Prostate gland (tissue), 2 donors: ENCODE measurements at regions of chr3 and their contacts with region 1.

Region 1: DNA sequence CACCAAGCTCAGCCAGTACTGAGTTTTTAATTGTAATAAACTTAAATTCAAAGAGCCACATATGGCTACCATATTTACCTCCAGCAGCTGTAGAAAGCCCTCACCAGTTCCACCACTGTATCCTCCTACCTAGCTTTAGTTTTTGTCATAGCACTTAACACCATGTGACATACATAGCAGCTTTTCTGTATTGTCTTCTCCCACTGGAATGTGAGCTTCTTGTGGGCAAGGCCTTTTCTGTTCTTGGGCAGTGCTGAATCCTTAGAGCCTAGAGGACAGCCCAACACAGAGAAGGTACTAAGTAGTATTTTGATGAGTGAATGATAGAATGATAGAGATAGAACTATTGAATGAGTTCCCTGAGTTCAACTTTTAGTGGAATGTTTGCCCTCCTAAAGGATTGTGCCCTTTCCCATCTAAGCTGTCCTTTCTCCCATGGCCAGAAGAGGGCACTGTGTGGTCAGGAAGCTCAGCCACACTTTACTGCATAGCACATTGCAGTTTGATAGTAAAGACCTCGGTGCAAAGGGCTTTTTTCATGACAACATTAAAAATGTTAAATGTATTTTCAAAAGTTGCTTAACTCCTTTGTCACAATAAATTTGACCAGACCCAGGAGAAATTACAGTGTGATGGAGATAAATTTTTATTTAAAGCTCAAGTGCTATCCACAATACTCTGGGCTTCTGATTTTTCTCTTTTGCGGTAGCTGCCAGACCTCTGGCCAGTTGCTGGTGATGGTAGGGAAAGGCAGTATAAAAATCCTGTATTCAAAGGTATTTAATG is 115.8 kb downstream of the GHSR start:
- DNase-seq: peak; percentile 67
- H3K4me3 ChIP-seq: no peak overlapping the region
- H3K27ac ChIP-seq: no peak overlapping the region
- H3K4me1 ChIP-seq: no peaks in the 10 kb centered on the region
- H3K27me3 ChIP-seq: no peaks in the 10 kb centered on the region
- CTCF ChIP-seq: peak; percentile 68 to 86 (median 77)
- POLR2A ChIP-seq: no peak

Region 2: GRCh38 chr3:172476347-172476746 is 143.9 kb after region 1 on chr3:
- intact Hi-C with region 1: loop called (anchors 2 kb)
- DNase-seq: no peak
- H3K4me3 ChIP-seq: no peak overlapping the region
- H3K27ac ChIP-seq: no peak overlapping the region
- H3K4me1 ChIP-seq: no peaks in the 10 kb centered on the region
- H3K27me3 ChIP-seq: no peaks in the 10 kb centered on the region
- CTCF ChIP-seq: no peak
- POLR2A ChIP-seq: no peak

Region 3: DNA sequence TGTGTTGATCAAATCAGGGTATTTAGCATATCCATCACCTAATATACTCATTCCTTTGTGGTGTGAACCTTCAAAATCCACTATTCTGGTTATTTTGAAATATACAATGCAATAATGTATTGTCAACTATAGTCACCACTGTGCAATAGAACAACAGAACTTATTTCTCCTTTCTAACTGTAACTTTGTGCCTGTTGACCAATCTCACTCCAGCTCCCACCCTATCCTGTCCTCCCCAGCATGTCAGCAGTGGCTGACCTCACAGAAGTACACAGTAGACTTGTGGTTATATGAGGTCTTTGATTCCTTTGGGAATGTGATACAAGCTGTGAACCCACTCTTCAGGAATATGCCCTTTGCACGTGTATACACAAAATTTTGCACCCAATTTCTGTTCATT is 482.3 kb after region 1 on chr3:
- intact Hi-C with region 1: no loop called
- DNase-seq: no peak
- H3K4me3 ChIP-seq: no peak overlapping the region
- H3K27ac ChIP-seq: no peak overlapping the region
- H3K4me1 ChIP-seq: no peaks in the 10 kb centered on the region
- H3K27me3 ChIP-seq: no peaks in the 10 kb centered on the region
- CTCF ChIP-seq: no peak
- POLR2A ChIP-seq: no peak